CD4-positive, alpha-beta memory T cell (primary cell): ENCODE measurements at regions of chr3 and their contacts with region 1.

Region 1: GRCh38 chr3:44198284-44199269 is 43.1 kb upstream of the TOPAZ1 start:
- DNase-seq: peak; percentile 52 to 62 (median 56)
- H3K4me3 ChIP-seq: no peak overlapping the region
- H3K4me3 Mint-ChIP-seq: no peak overlapping the region
- H3K27ac ChIP-seq: no peak overlapping the region
- H3K27ac Mint-ChIP-seq: no peak overlapping the region
- H3K4me1 ChIP-seq: no peaks in the 10 kb centered on the region
- H3K4me1 Mint-ChIP-seq: peaks cover 0 to 6% (median under 1%) of the 10 kb centered on the region in 4 donors
- H3K27me3 ChIP-seq: no peaks in the 10 kb centered on the region
- H3K27me3 Mint-ChIP-seq: peaks cover 5 to 18% of the 10 kb centered on the region in 2 donors

Region 2: GRCh38 chr3:43769471-43770425 is 428.8 kb before region 1 on chr3:
- CTCF ChIA-PET with region 1: no interaction called
- POLR2A ChIA-PET with region 1: no interaction called
- intact Hi-C with region 1: loop called (anchors 1 kb)
- DNase-seq: peak; percentile 65 to 77 (median 66)
- H3K4me3 ChIP-seq: no peak overlapping the region
- H3K4me3 Mint-ChIP-seq: peak overlapping the region in 7 of 8 donors; percentile 33 to 67 (median 48)
- H3K27ac ChIP-seq: peak overlapping the region; percentile 8
- H3K27ac Mint-ChIP-seq: peak overlapping the region; percentile 14 to 90 (median 81)
- H3K4me1 ChIP-seq: peaks cover 40% of the 10 kb centered on the region
- H3K4me1 Mint-ChIP-seq: peaks cover 19 to 56% (median 38%) of the 10 kb centered on the region in 4 donors
- H3K27me3 ChIP-seq: no peaks in the 10 kb centered on the region
- H3K27me3 Mint-ChIP-seq: peaks cover 2% of the 10 kb centered on the region in 2 donors

Region 3: DNA sequence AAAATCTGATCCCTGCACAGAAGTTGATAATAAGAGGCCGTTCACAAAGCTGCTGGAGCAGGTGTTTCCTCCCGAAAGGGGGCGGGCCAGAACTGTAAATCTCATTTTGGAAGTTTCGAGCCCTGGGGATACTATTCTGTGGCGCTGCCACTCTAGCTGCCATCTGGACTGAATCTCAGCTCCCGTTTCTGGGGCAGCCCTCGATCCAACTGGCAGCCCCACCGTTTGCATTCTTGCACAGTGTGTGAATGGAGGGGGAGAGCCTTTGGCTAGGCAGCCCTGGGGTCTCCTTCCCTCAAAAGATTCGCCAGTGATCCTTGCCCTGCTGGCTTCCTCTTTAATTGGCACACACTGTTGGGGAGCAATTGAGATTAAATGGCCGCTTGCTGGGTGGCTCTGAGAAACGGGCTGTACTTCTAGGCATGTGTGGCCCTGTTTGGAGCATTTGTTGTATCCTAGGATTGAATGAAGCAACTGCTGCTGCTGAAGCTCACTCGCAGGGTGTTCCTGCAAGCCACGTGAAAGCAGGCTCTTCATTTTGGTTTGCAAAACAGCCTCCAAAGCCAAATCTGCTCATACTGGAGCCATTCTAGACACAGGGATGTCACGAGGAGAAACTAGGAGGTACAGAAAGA is 14.1 kb before region 1 on chr3:
- CTCF ChIA-PET with region 1: interaction called, 10 read pairs
- POLR2A ChIA-PET with region 1: no interaction called
- intact Hi-C with region 1: no loop called
- DNase-seq: no peak
- H3K4me3 ChIP-seq: no peak overlapping the region
- H3K4me3 Mint-ChIP-seq: no peak overlapping the region
- H3K27ac ChIP-seq: no peak overlapping the region
- H3K27ac Mint-ChIP-seq: no peak overlapping the region
- H3K4me1 ChIP-seq: no peaks in the 10 kb centered on the region
- H3K4me1 Mint-ChIP-seq: no peaks in the 10 kb centered on the region
- H3K27me3 ChIP-seq: no peaks in the 10 kb centered on the region
- H3K27me3 Mint-ChIP-seq: peaks cover 17 to 30% of the 10 kb centered on the region in 2 donors